Body of pancreas (tissue), 4 donors: ENCODE measurements at regions of chr3 and their contacts with region 1.

Region 1: GRCh38 chr3:69739204-69740102 is at the start of gene MITF:
- DNase-seq: peak; percentile 88 to 93 (median 91)
- ATAC-seq: peak; percentile 96
- H3K4me3 ChIP-seq: peak within 1 kb of the TSS; percentile 54 to 55
- H3K27ac ChIP-seq: peak within 1 kb of the TSS in 3 of 4 donors; percentile 24 to 74 (median 73)
- H3K4me1 ChIP-seq: peaks cover 15% of the 10 kb centered on the region
- H3K27me3 ChIP-seq: no peaks in the 10 kb centered on the region
- CTCF ChIP-seq: peak in 1 of 7 experiments; percentile 15
- POLR2A ChIP-seq: peak in 2 of 3 donors; percentile 50 to 64
- total RNA-seq, gene MITF: 9.3 to 12.2 TPM

Region 2: DNA sequence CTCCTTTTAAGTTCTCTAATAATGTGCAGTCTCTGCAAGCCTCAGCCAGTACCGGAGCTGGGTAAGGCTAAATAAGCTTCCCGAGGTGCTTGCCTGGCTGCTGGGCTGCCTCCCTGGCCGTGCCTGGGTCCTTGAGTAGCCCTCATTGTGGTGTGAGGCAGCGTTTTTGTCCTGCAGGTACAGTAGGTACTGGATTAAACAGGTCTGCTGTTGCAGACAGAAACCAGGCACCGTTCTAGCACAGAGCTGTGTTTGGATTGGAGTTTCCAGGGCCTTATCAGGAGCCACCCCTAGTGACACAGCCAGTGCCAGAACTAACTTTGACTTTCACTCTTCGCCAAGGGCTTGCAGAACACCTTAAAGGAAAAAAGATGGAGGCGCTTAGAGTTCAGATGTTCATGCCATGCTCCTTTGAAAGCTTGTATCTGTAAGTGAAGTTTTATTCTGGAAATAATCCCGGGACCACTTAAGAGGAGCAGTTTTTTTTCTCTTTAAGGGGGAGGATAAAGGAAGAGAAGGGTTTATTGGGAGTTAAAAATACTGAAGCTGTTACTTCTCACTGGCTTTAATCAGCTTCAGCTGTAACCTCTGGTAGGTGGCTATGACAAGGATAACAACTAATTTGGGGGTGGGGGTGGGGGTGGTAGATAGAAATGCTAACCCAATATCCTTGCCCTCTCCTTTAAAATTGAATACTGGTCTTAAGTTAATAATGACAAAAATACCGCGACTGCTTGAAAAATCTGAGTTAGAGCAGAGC is 126.6 kb after region 1 on chr3:
- intact Hi-C with region 1: loop called (anchors 10 kb)
- DNase-seq: peak; percentile 81 to 90 (median 88)
- ATAC-seq: peak; percentile 100
- H3K4me3 ChIP-seq: peak overlapping the region in 1 of 2 donors; percentile 18
- H3K27ac ChIP-seq: peak overlapping the region; percentile 75 to 80 (median 78)
- H3K4me1 ChIP-seq: peaks cover 17% of the 10 kb centered on the region
- H3K27me3 ChIP-seq: no peaks in the 10 kb centered on the region
- CTCF ChIP-seq: no peak
- POLR2A ChIP-seq: peak in 2 of 3 donors; percentile 27 to 35